Calu3 (cell line): ENCODE measurements at regions of chr11 and their contacts with region 1.

Region 1: GRCh38 chr11:47895035-47895434 is 46.9 kb upstream of the NUP160 start:
- DNase-seq: no peak
- H3K4me3 Mint-ChIP-seq: no peak overlapping the region
- H3K27ac Mint-ChIP-seq: no peak overlapping the region
- H3K4me1 Mint-ChIP-seq: no peaks in the 10 kb centered on the region
- H3K27me3 Mint-ChIP-seq: no peaks in the 10 kb centered on the region
- CTCF ChIP-seq: no peak

Region 2: DNA sequence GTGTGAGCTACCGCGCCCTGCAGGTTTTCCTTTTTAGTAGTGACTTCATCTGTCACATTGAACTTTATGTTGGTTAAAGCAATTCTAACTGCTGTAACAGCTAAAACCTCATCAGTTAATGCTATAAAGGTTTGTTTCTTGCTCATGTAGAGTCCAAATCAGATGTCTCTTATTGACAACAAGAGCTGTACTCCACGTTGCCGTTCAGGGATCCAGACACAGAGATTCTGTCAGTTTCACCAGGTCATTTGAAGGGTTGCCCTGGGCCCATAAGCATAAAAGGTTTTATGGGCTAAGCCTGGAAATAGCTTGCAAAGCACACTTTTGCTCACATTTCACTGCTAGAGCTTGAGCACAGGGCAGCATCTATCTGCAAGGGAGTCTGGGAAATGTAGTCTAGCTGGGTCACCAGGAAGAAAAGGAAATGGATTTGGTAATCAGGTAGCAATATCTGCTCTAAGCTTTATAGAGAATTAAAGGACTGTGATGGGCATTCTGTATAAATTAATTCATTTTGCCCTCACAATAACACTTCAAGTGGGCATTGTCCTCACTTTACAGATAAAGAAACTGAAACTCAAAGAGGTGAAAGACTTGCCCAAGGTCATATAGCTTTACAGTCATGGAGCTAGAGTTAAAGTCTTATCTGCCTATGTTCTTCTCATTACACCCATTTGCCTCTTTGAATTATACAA is 60.2 kb after region 1 on chr11:
- CTCF ChIA-PET with region 1: no interaction called
- intact Hi-C with region 1: loop called (anchors 2 kb)
- DNase-seq: no peak
- H3K4me3 Mint-ChIP-seq: no peak overlapping the region
- H3K27ac Mint-ChIP-seq: no peak overlapping the region
- H3K4me1 Mint-ChIP-seq: no peaks in the 10 kb centered on the region
- H3K27me3 Mint-ChIP-seq: no peaks in the 10 kb centered on the region
- CTCF ChIP-seq: no peak

Region 3: DNA sequence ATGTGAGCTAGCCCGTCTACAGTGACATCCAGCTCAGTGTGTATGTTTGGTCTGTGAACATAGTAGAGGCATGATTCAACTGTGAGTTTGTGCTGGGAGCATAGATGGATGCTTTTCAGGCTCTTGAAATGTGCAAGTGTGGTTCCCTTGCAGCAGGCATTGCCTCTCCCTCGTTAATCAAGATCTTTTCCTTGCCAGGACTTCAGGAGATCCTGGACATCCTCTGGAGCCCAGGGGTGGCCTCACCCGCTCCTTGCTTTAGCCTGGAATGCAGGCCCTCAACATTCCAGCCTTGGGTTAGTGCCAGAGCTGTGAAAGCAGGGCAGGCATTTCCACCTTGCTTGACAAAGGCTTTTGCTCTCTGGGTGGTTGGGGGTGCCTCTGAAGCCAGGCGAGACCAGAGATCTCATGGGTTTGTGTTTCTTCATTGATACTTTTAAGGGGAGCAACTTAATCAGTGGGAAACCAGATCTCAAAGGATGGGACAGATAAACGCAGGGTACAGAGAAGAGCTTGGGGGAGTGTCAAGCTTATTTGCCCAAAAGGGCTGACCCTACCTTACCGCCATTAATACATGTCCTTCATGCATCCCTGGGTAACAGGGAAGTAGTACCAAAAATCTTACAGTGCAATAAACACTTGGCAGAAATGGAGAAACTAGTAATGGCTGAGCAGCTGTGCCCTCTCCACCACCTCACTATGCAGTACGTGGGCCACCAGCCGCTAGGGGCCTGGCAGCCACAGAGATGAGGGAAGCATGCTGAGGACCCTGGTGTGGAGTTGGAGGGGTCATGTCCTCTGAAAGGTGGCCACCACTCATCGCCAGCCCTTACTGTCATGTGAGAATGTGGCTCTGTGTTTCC is 157.4 kb after region 1 on chr11:
- CTCF ChIA-PET with region 1: no interaction called
- intact Hi-C with region 1: no loop called
- DNase-seq: peak; percentile 85
- H3K4me3 Mint-ChIP-seq: peak overlapping the region; percentile 60
- H3K27ac Mint-ChIP-seq: peak overlapping the region; percentile 97
- H3K4me1 Mint-ChIP-seq: peaks cover 78% of the 10 kb centered on the region
- H3K27me3 Mint-ChIP-seq: no peaks in the 10 kb centered on the region
- CTCF ChIP-seq: no peak

Region 4: GRCh38 chr11:48063424-48063978 is 168.5 kb after region 1 on chr11:
- CTCF ChIA-PET with region 1: no interaction called
- intact Hi-C with region 1: no loop called
- DNase-seq: peak; percentile 26
- H3K4me3 Mint-ChIP-seq: peak overlapping the region; percentile 48
- H3K27ac Mint-ChIP-seq: peak overlapping the region; percentile 77
- H3K4me1 Mint-ChIP-seq: peaks cover 71% of the 10 kb centered on the region
- H3K27me3 Mint-ChIP-seq: no peaks in the 10 kb centered on the region
- CTCF ChIP-seq: no peak